HepG2 (cell line): ENCODE measurements at regions of chr5 and their contacts with region 1.

Region 1: DNA sequence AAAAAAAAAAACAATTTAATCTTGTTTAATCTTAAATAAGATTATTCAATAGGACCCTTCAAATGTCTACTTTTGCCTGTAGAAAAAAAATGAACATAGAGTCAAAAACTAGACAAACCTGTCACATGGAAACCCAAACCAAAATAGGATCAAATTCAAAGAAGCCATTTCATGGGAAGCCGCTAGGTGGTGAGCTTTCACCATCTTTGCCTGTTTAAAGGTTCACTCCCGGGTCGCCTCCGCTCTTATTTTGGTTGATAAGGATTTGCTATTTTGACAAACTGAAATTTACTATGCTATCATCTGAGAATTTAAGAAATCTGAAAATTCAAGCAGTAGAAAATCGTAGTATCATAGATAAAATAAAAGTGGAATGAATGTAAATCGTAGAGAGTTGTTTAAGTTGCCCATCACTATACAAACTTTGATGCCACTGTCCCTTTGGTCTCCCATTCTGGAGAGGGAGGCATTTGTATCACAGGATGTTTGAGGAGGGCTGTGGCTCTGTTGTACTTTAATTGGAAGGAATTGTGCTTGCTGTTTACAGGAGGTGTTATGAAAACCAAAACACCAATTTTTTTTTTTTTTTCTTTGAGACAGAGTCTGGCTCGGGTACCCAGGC is 43.5 kb upstream of the DNAH5 start:
- DNase-seq: peak; percentile 37
- ATAC-seq: peak; percentile 61; the same call in 2 of the 3 replicates
- H3K4me3 ChIP-seq: no peak overlapping the region
- H3K27ac ChIP-seq: no peak overlapping the region
- H3K4me1 ChIP-seq: no peaks in the 10 kb centered on the region
- H3K27me3 ChIP-seq: peaks cover 0 to 4% of the 10 kb centered on the region in 2 experiments; a peak in 1 of 5 replicates
- CTCF ChIP-seq: peak; percentile 76
- EP300 ChIP-seq: no peak
- POLR2A ChIP-seq: no peak
- RAD21 ChIP-seq: peak; percentile 72

Region 2: DNA sequence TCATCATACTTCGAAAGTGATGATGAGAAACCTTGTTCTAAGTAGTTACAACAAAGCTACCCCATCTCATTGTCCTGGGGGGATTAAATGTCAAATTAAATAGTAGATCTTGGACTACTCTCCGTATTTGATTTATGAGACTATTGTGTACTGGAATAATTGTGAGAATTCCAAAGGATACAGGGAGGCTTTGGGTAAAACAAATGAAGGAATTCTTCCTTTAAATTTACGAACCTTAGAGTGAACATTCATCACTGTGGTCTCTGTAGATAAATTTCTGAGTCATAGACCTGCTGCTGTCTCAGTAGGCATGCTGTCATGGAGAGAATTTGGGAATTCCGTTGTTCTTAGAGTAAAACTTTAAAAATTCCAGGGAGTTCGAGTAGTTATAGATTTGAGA is 879.7 kb before region 1 on chr5:
- CTCF ChIA-PET with region 1: no interaction called
- POLR2A ChIA-PET with region 1: no interaction called
- in situ Hi-C with region 1: no loop called
- intact Hi-C with region 1: no loop called
- DNase-seq: no peak
- ATAC-seq: no peak
- H3K4me3 ChIP-seq: no peak overlapping the region
- H3K27ac ChIP-seq: no peak overlapping the region
- H3K4me1 ChIP-seq: no peaks in the 10 kb centered on the region
- H3K27me3 ChIP-seq: no peaks in the 10 kb centered on the region
- CTCF ChIP-seq: no peak
- EP300 ChIP-seq: no peak
- POLR2A ChIP-seq: no peak
- RAD21 ChIP-seq: no peak

Region 3: GRCh38 chr5:14032944-14033343 is 45.0 kb after region 1 on chr5:
- CTCF ChIA-PET with region 1: no interaction called
- POLR2A ChIA-PET with region 1: no interaction called
- in situ Hi-C with region 1: no loop called
- intact Hi-C with region 1: no loop called
- DNase-seq: no peak
- ATAC-seq: no peak
- H3K4me3 ChIP-seq: no peak overlapping the region
- H3K27ac ChIP-seq: no peak overlapping the region
- H3K4me1 ChIP-seq: peaks cover 28% of the 10 kb centered on the region
- H3K27me3 ChIP-seq: peaks cover 0 to 7% of the 10 kb centered on the region in 2 experiments; a peak in 2 of 5 replicates
- CTCF ChIP-seq: no peak
- EP300 ChIP-seq: no peak
- POLR2A ChIP-seq: no peak
- RAD21 ChIP-seq: no peak

Region 4: DNA sequence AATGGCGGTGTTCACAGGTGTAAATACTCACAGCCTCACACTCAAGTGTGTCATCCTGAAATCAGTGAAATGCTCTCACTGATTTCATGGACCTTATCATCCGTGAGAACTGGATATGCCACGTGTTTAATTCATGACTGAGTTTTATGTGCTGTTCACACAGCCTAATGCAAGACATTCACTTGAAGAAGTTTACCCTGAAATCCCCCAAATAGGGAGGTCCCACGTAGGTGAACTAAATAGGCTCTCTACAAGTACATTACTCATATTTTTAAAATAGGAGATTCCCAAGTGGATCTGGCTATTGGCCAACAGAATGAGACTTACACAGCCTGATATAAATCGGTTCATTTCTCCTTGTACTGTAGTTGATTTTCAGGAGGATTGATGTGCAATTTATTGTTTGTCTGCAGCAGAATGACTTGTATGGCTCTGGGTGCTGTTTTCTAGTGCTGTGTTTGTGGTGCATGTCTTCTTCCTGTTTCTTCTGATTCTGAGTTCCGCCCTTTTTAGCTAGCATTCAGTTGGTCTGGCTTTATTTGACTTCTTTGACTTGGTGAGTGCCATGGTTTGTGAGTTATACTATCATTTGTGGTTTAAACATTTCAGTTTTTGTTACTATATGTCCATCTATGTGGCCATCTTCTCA is 180.3 kb after region 1 on chr5:
- CTCF ChIA-PET with region 1: no interaction called
- POLR2A ChIA-PET with region 1: no interaction called
- in situ Hi-C with region 1: no loop called
- intact Hi-C with region 1: no loop called
- DNase-seq: no peak
- ATAC-seq: peak; percentile 63
- H3K4me3 ChIP-seq: peak overlapping the region; percentile 12 to 29 (median 25); a peak in 4 of 6 replicates
- H3K27ac ChIP-seq: peak overlapping the region; percentile 60
- H3K4me1 ChIP-seq: peaks cover 96% of the 10 kb centered on the region
- H3K27me3 ChIP-seq: no peaks in the 10 kb centered on the region
- CTCF ChIP-seq: no peak
- EP300 ChIP-seq: no peak
- POLR2A ChIP-seq: no peak
- RAD21 ChIP-seq: no peak

Region 5: DNA sequence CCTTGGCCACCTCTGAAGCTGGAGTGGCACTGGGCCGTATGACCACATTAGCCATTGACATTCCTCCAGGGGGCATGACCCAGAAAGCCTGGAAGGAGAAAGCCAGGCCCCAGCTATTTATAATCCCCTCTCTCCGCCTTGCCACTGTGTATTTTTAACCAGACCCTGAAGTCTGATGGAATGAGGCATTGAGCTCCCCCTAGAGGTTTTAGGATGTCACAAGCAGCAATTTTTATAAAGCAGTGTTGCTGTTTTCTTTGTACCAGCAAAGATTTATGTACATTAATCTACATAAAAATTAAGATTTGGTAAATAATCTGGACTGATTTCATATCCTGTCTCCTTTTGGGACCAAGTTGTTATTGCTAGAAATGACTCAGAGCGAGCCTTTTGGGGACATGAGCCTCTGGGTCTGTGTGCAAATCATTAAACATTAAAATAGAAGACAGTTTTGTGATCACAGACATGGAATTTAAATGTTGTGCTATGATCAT is 282.3 kb after region 1 on chr5:
- CTCF ChIA-PET with region 1: interaction called, 10 read pairs
- POLR2A ChIA-PET with region 1: no interaction called
- in situ Hi-C with region 1: loop called (anchors 5 kb)
- intact Hi-C with region 1: loop called (anchors 1 kb)
- DNase-seq: peak; percentile 72
- ATAC-seq: peak; percentile 83
- H3K4me3 ChIP-seq: no peak overlapping the region
- H3K27ac ChIP-seq: no peak overlapping the region
- H3K4me1 ChIP-seq: peaks cover 61% of the 10 kb centered on the region
- H3K27me3 ChIP-seq: no peaks in the 10 kb centered on the region
- CTCF ChIP-seq: peak; percentile 76
- EP300 ChIP-seq: no peak
- POLR2A ChIP-seq: no peak
- RAD21 ChIP-seq: peak; percentile 55; the same call in 1 of the 2 replicates

Region 6: GRCh38 chr5:14364576-14365472 is 376.9 kb after region 1 on chr5:
- CTCF ChIA-PET with region 1: interaction called, 11 read pairs
- POLR2A ChIA-PET with region 1: no interaction called
- in situ Hi-C with region 1: loop called (anchors 5 kb)
- intact Hi-C with region 1: loop called (anchors 1 kb)
- DNase-seq: peak; percentile 33
- ATAC-seq: peak; percentile 78
- H3K4me3 ChIP-seq: no peak overlapping the region
- H3K27ac ChIP-seq: no peak overlapping the region
- H3K4me1 ChIP-seq: no peaks in the 10 kb centered on the region
- H3K27me3 ChIP-seq: no peaks in the 10 kb centered on the region
- CTCF ChIP-seq: peak; percentile 60
- EP300 ChIP-seq: no peak
- POLR2A ChIP-seq: no peak
- RAD21 ChIP-seq: 0 out of 2 replicates have a peak, but pooled peaks have one; percentile 14